Uterus (tissue), 4 donors: ENCODE measurements at regions of chr20 and their contacts with region 1.

Region 1: DNA sequence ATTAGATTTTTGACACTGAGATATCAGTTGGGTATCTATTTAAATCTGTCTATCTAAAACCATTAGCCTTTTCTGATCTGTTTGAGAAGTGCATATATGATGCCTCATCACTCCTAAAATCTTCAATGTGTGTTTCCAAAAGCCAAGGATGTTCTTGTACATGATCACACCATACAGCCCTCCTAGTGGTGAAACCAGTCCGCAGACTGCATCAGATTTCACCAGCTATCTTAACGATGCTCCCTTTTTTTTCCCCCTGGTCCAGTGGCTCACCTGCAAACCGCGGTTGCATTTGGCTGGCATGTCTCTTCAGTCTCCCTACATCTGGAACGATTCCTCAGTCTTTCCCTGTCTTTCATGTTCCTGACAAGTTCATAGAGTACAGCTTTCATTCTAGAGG is 4.0 kb downstream of the KIZ start:
- DNase-seq: no peak
- H3K4me3 ChIP-seq: no peak overlapping the region
- H3K27ac ChIP-seq: no peak overlapping the region
- H3K4me1 ChIP-seq: no peaks in the 10 kb centered on the region
- H3K27me3 ChIP-seq: no peaks in the 10 kb centered on the region
- CTCF ChIP-seq: no peak
- POLR2A ChIP-seq: no peak

Region 2: DNA sequence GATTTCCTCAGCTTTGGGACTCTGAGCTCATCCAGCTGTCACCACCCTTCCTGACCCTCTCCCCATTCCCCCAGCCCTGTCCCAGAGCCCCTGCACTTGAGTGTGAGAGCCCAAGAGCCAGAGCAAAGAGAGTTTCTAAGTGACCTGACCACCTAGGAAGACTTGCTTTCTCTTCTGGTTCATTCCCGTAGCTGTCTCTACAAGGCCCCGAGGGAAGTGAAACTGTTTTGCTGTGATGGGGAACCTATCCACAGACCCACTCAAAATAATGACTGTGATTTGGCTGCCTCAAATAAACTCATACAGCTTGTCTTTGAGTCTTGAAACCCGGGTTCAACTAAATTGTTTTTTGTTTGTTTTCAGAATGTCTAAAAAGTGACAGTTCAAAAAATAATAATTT is 98.7 kb after region 1 on chr20:
- intact Hi-C with region 1: loop called (anchors 10 kb)
- DNase-seq: no peak
- H3K4me3 ChIP-seq: no peak overlapping the region
- H3K27ac ChIP-seq: no peak overlapping the region
- H3K4me1 ChIP-seq: no peaks in the 10 kb centered on the region
- H3K27me3 ChIP-seq: no peaks in the 10 kb centered on the region
- CTCF ChIP-seq: no peak
- POLR2A ChIP-seq: no peak